Head of caudate nucleus (tissue), 42 donors: ENCODE measurements at regions of chr13 and their contacts with region 1.

Region 1: DNA sequence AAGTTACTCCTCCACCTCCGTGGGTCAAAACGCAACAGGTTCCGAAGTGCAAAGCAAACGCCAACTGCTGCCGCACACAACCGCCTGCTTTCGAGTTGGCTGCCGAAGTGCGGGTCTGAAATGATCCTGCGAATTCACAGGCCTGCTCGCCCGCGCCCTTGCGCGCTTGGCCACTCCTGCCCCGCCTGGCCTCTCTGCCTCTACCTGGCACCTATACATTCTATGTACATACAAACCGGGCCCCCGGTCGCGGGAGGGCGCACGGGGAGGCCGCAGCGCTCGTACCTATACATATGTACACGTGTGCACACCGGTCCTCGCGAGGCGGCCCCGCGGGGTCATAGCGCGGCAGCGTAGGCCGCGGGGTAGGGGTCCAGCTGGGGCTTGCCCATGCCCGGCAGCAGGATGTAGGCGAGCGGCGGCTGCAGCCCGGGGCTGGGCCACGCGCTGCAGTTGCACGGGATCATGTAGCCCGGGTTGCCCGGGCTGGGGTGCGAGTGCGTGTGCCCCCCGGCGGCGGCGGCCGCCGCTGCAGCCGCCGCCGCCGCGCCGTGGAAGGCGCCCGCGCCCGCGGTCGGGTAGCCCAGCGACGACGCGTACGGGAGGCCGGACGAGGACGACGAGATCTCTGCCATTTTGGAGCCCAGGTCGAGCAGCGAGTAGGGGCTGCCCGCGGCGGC is 1.3 kb downstream of the SOX21 start:
- DNase-seq: peak in 30 of 42 donors; percentile 6 to 75 (median 48)

Region 2: GRCh38 chr13:94660695-94661326 is 50.2 kb before region 1 on chr13:
- intact Hi-C with region 1: loop called (anchors 5 kb)
- DNase-seq: peak in 13 of 42 donors; percentile 15 to 67 (median 30)

Region 3: DNA sequence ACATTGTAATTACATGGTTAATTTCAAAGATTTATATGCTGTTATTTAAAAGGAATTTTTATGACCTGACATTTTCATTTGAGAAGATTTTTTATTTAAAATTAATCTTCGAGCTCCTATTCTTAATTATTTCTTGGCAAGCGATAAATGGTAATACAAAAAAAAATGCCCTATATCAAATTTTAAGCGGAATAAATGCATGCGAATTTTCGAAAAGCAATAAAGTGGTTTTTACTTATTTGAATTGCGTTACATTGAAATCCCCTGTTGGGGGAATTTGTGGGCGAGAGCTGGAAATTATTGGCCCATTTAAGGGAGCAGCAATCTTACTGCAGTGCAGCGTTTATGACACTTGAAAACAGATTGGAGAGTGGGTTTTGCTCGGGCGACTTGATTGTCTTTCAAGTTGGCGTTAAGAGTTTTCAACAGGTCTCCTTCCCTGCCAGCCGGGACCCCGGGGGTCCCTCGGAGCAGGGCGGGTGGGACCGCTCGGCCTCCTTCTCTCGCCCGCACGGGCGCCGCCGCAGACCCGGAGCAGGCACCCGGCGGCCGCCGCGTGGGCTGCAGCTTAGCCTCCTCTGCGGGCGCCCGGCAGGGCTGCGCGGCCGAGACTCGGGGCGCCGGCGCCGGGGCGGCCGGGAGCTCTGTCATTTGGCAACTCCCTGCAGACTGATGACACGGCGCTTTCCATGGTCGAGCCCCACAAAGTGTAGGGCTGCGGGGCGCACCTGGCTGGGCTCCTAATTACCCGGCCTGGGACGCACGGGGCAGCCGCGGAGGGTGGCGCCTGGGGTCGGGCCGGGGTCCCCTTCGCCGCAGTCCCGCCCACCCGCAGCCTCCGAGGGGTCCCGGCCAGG is 256.4 kb after region 1 on chr13:
- intact Hi-C with region 1: loop called (anchors 5 kb)
- DNase-seq: peak in 38 of 42 donors; percentile 5 to 77 (median 42)